Activated CD4-positive, alpha-beta T cell treated with anti-CD3 and anti-CD28 coated beads for 36 hours (primary cell): ENCODE measurements at regions of chr15 and their contacts with region 1.

Region 1: DNA sequence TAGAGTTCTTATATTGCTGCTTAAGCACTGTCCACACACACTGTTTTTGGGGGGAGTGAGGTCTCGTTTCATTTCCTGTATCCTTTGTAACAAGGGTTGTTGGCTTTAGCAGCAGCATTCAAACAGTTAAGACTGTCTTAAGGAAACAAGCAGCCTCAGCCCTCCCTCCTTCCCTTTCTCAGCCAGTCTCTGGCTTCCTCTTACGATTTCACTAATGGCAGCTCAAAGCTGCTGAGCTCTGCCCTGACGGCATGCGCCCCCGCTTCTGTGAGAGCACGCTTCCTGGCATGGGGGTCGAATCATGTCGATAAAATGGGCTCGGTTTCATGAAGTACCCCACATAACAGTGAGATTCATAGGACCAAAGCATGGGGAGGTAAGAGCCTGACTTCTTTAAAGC is 105.0 kb downstream of the KLHL25 start:
- DNase-seq: peak; percentile 75
- ATAC-seq: peak; percentile 52
- H3K4me3 Mint-ChIP-seq: peak overlapping the region; percentile 78
- H3K27ac Mint-ChIP-seq: peak overlapping the region; percentile 98
- H3K4me1 Mint-ChIP-seq: peaks cover 77% of the 10 kb centered on the region
- H3K27me3 Mint-ChIP-seq: no peaks in the 10 kb centered on the region

Region 2: DNA sequence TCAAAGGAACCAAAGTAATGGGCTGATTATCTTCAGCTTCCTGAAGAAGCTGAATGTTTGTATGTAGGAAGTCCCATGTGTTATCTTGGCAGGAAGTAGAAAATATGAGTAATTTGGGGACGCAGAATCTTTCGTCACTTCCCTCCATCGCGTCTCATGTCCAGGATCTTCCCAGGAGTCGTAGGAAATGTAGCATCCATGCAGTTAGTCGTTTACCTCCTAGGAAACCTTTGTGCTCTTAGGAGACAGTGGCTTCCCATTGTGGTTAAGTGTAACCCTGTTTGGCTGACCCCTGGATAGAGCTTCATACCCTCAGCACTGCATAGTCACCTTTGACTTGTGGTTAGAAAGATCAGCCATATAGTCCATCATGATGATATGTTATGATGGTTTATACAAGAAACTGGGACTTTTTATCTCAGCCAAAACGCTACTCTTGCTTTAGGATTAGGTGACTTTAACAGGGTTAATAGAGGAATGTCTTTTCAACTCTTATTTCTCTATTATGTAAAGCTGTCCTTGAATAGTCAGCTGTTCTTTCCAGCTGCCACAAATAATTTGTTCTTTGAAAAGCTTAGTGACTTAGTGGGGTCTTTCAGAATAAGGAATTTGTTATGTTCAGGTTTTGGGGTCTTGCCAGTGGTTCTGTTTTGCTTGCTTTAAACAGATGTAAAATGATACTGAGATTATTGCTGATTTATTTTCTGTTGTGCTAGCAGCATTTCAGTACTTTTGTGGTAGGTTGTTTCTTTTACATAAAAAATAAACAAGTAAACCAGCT is 12.8 kb after region 1 on chr15:
- CTCF ChIA-PET with region 1: interaction called, 50 read pairs
- POLR2A ChIA-PET with region 1: interaction called, 31 read pairs
- intact Hi-C with region 1: loop called (anchors 1 kb)
- DNase-seq: peak; percentile 46
- ATAC-seq: peak; percentile 53
- H3K4me3 Mint-ChIP-seq: peak overlapping the region; percentile 70
- H3K27ac Mint-ChIP-seq: peak overlapping the region; percentile 94
- H3K4me1 Mint-ChIP-seq: peaks cover 73% of the 10 kb centered on the region
- H3K27me3 Mint-ChIP-seq: no peaks in the 10 kb centered on the region

Region 3: GRCh38 chr15:85750319-85750806 is 60.6 kb after region 1 on chr15:
- CTCF ChIA-PET with region 1: no interaction called
- POLR2A ChIA-PET with region 1: no interaction called
- intact Hi-C with region 1: no loop called
- DNase-seq: peak; percentile 2
- ATAC-seq: no peak
- H3K4me3 Mint-ChIP-seq: no peak overlapping the region
- H3K27ac Mint-ChIP-seq: no peak overlapping the region
- H3K4me1 Mint-ChIP-seq: peaks cover 30% of the 10 kb centered on the region
- H3K27me3 Mint-ChIP-seq: no peaks in the 10 kb centered on the region